ENCODE measurements at regions of chr4 and their contacts with region 1.

Region 1: DNA sequence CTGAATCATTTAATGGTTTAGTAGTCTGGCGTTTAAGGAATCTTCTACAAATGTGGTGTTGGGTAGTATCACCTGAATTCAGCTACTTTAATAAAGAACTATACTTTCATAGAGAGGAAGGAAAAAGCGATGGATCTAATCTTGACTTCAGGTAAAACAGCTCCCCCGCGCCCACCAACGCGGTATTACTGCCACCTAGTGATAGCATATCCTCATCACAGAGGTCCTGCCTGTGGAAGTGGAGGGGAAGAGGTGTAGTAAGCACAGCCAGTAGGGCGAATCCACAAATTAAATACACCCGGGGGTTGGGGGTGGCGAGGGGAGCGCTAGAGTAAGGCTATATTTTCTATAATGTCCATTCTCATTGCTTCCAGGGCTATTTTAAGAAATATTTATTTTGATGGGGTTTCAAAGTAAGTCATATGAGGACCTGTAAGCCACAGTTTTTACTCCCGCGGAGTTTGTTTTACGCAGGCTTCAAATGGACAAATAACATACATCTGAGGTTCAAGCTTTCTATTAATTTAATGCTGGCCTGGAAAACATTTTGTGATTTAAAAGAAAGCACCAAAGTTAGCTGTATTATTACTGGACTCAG is 8.3 kb upstream of the DAPP1 start:
- DNase-seq: peak; percentile 82
- H3K4me3 ChIP-seq: peak overlapping the region; percentile 35
- H3K27ac ChIP-seq: peak overlapping the region; percentile 59
- H3K4me1 ChIP-seq: peaks cover 62% of the 10 kb centered on the region
- CTCF ChIP-seq: peak; percentile 96

Region 2: DNA sequence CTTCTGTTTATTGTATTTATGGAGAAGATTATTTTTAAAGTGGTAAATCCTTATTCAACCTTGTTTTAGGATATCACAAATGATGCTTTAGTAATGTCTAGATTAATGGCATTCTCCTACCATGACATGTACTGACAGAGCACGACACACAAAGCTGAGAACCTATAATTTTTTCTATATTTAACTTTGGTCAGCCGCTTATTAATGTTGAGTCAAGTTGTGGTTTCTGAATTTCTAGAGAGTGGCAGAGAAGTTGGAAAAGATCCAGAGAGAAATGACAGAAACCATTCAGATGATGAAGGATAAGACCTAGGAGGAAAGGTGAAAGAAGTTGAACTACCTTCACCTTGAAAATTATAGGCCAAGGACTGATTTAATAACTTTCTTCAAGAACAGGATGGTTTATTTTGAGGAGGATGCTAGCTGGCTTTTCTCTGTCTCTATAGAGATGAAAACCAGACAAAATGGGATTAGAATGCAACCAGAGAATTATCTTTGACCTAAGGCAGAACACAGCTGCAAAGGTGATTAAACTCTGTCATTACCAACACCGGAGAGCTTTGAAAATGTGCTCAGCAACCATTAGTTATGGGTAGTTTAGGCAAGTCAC is 1087.4 kb before region 1 on chr4:
- CTCF ChIA-PET with region 1: no interaction called
- POLR2A ChIA-PET with region 1: no interaction called
- intact Hi-C with region 1: no loop called
- DNase-seq: no peak
- H3K4me3 ChIP-seq: no peak overlapping the region
- H3K27ac ChIP-seq: no peak overlapping the region
- H3K4me1 ChIP-seq: no peaks in the 10 kb centered on the region
- CTCF ChIP-seq: no peak

Region 3: DNA sequence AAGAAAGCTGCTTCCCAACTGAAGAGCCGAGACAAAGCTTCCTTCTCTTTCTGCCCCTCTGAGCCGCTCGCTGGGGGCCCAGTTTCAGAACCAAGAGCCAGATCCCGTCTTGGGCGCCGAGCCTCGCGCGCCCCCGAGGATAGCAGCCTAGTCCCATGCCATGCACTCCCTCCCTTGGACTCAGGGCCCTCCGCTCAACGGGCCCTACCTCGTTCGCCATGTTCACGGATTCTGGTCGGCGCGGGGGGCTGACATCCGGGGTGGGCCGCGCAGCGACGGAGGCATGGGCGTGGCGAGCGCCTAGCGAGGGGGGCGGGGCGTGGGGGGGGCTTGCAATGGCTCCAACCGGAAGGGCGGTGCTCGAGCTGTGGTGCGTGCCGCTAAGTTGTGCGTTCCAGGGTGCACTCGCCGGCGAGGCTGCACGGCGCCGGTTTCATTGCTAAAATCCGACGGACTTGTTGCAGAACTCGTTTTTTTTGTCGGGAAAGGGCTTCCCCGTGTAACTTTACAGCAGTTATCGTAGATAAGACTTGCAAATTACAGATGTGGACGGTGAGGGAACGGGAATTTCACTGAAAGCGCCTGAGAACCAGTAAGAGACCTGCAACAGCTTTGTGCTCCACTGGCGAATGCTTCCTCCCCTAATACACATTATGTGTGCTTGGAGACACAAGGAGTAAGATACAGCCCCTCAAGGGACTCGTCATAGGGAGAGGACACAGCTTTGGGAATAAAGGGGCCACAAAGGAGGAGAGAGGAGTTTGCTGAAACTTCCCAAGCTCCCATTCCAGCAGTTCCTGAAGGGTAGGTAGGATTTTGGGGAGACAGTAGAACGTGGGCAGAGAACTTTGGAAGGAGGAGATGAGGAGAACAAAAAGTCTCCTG is 719.6 kb before region 1 on chr4 and contains the start of gene ADH5:
- CTCF ChIA-PET with region 1: no interaction called
- POLR2A ChIA-PET with region 1: no interaction called
- intact Hi-C with region 1: loop called (anchors 5 kb)
- DNase-seq: peak; percentile 93
- H3K4me3 ChIP-seq: peak within 1 kb of the TSS; percentile 75
- H3K27ac ChIP-seq: peak within 1 kb of the TSS; percentile 50
- H3K4me1 ChIP-seq: peaks cover 23% of the 10 kb centered on the region
- CTCF ChIP-seq: no peak
- total RNA-seq, gene ADH5: 50.0 and 62.6 TPM in 2 replicates

Region 4: DNA sequence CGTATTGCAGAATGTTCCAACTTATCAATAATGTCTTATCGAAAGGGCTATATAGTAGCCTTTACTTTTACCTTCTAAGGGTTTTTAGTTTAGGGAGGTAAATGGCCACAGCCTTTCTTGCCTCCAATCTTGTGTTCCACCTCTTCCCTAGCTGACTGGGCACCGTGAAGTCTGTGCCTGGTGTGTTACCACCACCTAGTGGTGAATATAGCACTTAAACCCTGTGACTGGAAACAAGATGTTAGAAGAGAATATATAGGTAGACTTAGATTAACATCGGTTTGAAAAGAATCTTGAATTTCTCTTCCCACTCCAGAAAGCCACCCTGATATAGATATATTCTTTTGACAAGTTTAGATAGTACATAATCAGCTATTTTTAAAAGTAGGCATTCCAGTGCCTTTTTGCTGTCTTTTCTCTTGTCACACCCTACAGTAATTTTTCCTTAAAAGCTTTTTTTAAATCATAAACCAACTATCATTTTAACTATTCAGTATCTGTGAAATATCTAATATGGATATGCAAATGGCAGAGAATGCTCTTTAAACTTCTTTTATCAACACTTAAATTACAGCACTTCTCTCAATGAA is 345.4 kb before region 1 on chr4:
- CTCF ChIA-PET with region 1: no interaction called
- POLR2A ChIA-PET with region 1: no interaction called
- intact Hi-C with region 1: loop called (anchors 10 kb)
- DNase-seq: peak; percentile 61
- H3K4me3 ChIP-seq: no peak overlapping the region
- H3K27ac ChIP-seq: no peak overlapping the region
- H3K4me1 ChIP-seq: no peaks in the 10 kb centered on the region
- CTCF ChIP-seq: peak; percentile 90

Region 5: DNA sequence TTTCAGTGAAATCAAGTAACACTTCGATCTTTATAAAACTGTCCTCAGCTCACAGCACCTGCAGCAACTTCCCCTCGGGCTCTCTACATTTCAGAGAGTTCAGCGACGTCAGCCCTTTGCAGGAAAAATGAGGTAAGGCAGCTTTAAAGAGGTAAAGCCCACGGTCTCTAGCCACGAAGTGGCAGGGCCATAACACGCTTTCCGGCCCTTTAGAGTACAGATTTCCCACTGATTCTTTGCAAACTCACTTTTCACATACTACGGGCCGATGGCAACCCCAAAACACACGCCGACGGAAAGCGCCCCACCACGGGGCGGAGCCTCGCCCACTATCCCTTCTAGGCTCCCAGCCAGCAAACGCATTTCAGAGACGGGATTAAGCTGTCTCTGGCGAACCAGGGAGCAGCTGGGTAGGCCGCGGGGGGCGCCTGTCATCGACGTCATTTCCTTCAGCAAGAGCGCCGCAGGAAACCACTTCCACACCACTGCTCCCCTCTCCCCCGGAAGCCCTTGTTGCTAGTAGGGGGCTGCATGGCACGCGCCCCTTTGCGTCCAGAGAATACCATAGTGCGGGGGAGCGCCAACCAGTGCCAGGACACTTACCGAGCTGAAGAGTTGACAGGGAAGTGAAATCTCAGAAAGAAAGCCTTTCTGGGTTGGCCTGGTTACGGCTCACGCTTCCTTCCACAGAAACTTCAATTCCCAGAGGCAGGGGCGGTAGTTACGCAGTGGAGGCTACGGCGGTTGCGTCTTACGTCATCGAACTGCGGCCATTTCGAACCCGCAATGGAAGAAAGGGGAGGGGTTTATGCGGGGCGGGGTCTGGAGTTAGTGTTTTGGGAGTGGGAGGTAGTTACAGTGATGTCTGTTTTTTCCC is 244.8 kb before region 1 on chr4 and contains the start of gene TRMT10A:
- CTCF ChIA-PET with region 1: no interaction called
- POLR2A ChIA-PET with region 1: interaction called, 17 read pairs
- intact Hi-C with region 1: loop called (anchors 1 kb)
- DNase-seq: peak; percentile 96
- H3K4me3 ChIP-seq: peak within 1 kb of the TSS; percentile 80
- H3K27ac ChIP-seq: peak within 1 kb of the TSS; percentile 78
- H3K4me1 ChIP-seq: peaks cover 12% of the 10 kb centered on the region
- CTCF ChIP-seq: no peak
- total RNA-seq, gene TRMT10A: 7.9 and 13.3 TPM in 2 replicates

Region 6: DNA sequence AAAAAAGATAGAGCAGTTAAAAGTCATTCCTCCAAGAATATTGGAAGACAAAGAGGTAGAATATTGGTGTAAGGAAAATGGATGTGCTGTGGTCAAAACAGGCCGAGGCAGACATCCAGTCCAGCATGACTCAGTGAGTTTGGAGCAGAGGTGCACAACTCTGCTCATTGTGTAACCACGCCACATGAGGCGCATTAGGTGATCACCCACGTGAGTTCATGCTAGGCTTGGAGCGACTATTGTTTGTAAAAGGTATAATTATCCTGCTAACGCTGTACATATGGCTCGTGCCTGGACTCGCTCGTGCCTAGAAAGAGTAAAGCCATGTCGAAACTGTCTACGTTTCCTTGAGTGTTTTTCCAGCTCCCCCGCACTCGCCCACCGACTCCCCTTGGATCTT is 174.6 kb before region 1 on chr4:
- CTCF ChIA-PET with region 1: no interaction called
- POLR2A ChIA-PET with region 1: no interaction called
- intact Hi-C with region 1: loop called (anchors 10 kb)
- DNase-seq: no peak
- H3K4me3 ChIP-seq: no peak overlapping the region
- H3K27ac ChIP-seq: no peak overlapping the region
- H3K4me1 ChIP-seq: peaks cover 12% of the 10 kb centered on the region
- CTCF ChIP-seq: no peak

Region 7: GRCh38 chr4:99821918-99822503 is 13.7 kb after region 1 on chr4:
- CTCF ChIA-PET with region 1: interaction called, 3 read pairs
- POLR2A ChIA-PET with region 1: interaction called, 22 read pairs
- intact Hi-C with region 1: no loop called
- DNase-seq: peak; percentile 78
- H3K4me3 ChIP-seq: peak overlapping the region; percentile 80
- H3K27ac ChIP-seq: peak overlapping the region; percentile 95
- H3K4me1 ChIP-seq: peaks cover 87% of the 10 kb centered on the region
- CTCF ChIP-seq: no peak

Region 8: GRCh38 chr4:99885063-99885664 is 76.8 kb after region 1 on chr4:
- CTCF ChIA-PET with region 1: no interaction called
- POLR2A ChIA-PET with region 1: interaction called, 5 read pairs
- intact Hi-C with region 1: loop called (anchors 1 kb)
- DNase-seq: peak; percentile 66
- H3K4me3 ChIP-seq: no peak overlapping the region
- H3K27ac ChIP-seq: no peak overlapping the region
- H3K4me1 ChIP-seq: no peaks in the 10 kb centered on the region
- CTCF ChIP-seq: peak; percentile 88

Measured in OCI-LY7 (cell line).